ENCODE measurements at regions of chr13 and their contacts with region 1.

Region 1: DNA sequence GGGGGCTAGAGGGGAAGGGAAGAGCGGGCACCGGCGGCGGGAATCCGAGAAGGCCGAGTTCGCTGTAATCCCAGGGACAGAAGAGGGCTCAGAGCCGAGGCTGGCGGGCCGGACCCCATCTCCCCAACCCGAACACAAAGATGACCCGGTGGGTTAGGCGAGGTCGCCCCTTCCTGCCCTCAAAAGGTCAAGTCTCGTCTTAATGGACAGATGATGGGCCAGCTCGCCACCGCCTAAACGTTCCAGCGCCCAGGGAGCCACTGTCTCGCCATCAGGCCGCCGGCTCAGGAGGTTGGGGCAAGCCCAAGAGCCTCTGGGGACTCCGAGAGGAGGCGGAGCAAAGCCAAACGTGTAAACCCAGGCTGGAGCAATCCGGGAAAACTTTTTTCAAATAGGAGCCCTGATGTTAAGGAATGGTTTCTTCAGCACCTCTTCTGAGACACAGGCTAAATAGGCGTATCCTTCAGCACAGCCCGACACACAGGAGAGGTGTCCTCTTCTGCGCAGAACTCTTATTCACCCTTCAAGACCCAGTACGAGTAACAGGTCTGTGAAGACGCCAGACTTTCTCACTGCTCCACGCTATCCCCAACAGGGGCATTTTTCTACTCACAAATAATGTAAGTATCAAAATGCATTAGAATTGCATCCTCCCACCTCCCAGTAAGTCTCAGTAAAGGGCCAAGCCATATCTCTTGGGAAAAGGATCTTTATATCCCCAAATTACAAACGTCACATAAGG is 6.3 kb upstream of the POU4F1 start:
- DNase-seq: peak in 1 of 10 donors; percentile 81

Region 2: DNA sequence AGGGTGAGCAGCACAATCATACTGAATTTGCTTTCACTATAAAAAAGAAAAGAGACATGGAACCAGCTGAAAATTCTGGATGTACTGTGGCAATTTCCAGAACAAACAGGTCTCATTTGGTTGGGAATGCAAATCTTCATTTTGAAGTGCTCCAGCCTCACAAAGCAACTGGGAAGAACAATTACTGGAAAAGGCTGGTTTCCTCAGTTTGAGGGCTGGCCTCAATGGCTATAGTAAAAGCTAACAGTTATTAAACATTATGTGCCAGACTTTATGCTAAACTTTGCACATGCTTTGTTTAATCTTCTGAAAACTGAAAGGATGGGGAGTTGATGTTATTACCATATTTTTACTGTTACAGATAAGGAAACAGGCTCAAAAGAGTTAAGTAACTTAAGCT is 46.3 kb after region 1 on chr13:
- intact Hi-C with region 1: loop called (anchors 2 kb)
- DNase-seq: no peak

Measured in posterior cingulate gyrus (tissue), 11 donors.